Ascending aorta (tissue), 2 donors: ENCODE measurements at regions of chr1 and their contacts with region 1.

Region 1: DNA sequence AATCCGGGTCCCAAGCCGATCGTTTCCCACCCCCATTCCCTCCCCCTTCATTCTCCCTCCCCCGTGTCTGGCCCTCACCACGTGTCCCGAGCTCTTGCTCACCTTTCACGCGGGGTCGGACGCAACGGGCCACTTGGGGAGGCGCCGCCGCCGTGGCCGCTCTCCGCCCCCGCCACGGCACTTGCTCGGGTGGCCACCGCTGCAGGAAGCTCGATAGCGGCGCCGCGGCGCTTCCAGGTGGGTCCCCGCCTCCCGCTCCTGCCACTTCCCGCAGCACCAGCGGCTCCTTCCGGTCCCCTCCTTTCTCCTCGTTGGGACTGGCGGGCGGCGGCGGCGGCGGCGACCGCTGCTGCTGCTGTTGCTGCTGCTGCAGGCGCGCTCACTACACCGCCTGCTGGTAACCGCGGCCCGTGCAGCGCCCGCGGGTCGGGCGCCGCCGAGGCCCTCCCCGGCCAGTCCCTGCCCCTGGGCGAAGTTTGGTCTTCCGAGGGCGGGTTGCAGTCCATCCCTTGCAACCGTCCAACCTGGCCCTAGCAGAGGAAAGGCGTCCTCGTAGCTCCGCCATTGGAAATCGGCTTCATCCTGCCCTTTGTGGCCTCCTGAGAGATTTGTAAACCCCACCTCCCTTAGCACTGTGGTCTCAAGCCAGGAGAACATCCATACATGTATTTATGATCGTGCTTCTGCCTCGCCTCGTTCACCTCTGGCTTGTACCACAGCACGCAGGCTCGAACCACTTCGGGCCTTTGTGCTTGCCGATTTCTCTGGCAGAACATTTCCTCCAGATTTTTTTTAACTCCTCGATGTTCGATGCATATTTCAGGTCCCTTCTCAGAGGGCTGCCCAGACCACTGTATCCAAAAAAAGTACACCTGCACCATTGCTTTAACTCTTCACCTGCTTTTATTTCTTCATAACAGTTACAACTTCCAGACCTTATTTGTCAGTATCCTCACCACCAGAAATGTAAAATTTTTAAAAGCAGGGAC is 996 bp upstream of the ZZZ3 start:
- DNase-seq: peak; percentile 67 to 96
- H3K4me3 ChIP-seq: peak overlapping the region; percentile 63 to 71
- H3K27ac ChIP-seq: peak overlapping the region; percentile 90
- H3K4me1 ChIP-seq: peaks cover 0 to 25% of the 10 kb centered on the region in 2 donors
- H3K27me3 ChIP-seq: no peaks in the 10 kb centered on the region
- CTCF ChIP-seq: peak; percentile 79 to 95 (median 92)

Region 2: DNA sequence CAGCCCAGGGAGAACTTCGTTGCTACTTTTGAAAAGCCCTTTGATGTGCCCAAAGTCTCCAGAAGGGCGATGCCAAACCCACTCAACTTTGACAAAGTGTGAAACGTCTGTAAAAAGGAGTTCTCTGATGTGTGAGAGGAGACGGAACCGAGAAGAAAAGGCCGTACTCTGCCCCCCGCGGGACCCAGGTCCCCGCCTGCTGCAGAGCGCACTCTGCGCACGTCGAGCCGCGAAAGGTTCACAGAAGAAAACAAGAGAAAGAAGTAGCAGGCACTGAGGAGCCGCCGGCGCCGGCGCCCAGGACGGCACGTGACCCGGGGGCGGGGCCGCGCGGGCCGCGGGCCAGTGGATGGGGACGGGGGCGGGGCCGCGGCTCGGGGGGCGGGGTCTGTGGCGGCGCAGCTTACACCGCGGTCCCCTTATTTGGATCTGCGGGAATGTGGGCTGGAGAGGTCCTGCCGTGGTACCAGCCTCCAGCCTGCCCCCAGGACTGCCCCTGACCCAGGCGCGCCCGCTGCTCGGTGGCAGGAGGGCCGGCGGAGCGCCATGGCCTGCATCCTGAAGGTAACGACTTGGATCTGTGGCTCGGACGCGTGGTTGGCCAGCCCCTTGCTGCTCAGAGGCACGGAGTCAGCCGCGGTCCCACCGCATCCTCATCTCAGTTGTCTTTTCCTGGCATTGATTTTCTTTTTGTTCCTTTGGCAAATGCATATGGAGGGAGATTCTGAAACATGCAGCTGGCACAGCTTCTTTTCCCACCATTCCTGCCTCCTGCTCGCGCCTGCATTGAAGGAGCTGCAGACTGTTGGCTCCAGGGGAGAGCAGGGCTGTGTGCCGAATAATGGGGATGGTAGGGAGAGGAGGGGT is 1608.9 kb before region 1 on chr1 and contains the start of gene ST6GALNAC3:
- intact Hi-C with region 1: loop called (anchors 10 kb)
- DNase-seq: peak; percentile 41 to 88
- H3K4me3 ChIP-seq: peak within 1 kb of the TSS; percentile 58 to 74
- H3K27ac ChIP-seq: peak within 1 kb of the TSS; percentile 58 to 76
- H3K4me1 ChIP-seq: peaks cover 0 to 8% of the 10 kb centered on the region in 2 donors
- H3K27me3 ChIP-seq: no peaks in the 10 kb centered on the region
- CTCF ChIP-seq: no peak
- total RNA-seq, gene ST6GALNAC3: 34.5 TPM

Region 3: DNA sequence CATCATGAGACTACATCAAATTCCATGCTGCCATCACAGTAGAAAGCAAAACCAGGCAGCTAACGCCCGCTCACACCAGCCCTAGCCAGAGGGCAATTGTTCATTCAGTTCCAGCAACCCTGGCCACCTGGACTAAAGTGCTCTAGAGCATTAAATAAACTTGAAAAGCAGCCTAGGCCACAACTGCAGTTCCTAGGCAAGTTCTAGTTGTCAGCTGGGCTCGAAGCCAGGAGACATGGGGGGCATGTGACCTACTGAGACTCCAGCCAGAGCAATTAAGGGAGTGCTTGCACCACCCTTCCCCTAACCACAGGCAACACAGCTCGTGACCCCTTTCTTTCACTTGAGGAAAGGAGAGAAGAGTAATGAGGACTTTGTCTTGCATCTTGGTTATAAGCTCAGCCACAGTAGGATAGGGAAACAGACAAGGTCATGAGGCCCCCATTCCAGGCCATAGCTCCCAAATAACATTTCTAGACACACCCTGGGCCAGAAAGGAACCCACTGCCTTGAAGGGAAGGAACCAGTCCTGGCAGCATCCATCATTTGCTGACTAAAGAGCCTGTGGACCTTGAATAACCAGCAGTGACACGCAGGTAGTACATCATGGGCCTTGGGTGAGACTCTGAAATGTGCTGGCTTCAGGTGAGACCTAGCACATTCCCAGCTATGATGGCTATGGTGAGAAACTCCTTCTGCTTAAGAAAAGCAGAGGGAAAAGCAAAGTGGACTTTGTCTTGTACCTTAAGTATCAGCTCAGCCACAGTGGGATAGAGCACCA is 78.0 kb before region 1 on chr1:
- intact Hi-C with region 1: no loop called
- DNase-seq: peak in 1 of 2 donors; percentile 17
- H3K4me3 ChIP-seq: no peak overlapping the region
- H3K27ac ChIP-seq: no peak overlapping the region
- H3K4me1 ChIP-seq: no peaks in the 10 kb centered on the region
- H3K27me3 ChIP-seq: no peaks in the 10 kb centered on the region
- CTCF ChIP-seq: no peak

Region 4: GRCh38 chr1:77759071-77760028 is 75.9 kb after region 1 on chr1 and contains the start of gene USP33:
- intact Hi-C with region 1: loop called (anchors 5 kb)
- DNase-seq: peak; percentile 53 to 90
- H3K4me3 ChIP-seq: peak within 1 kb of the TSS; percentile 90 to 96
- H3K27ac ChIP-seq: peak within 1 kb of the TSS; percentile 88 to 89
- H3K4me1 ChIP-seq: peaks cover 0 to 4% of the 10 kb centered on the region in 2 donors
- H3K27me3 ChIP-seq: no peaks in the 10 kb centered on the region
- CTCF ChIP-seq: no peak
- total RNA-seq, gene USP33: 28.6 TPM

Region 5: GRCh38 chr1:77888081-77888780 is 204.8 kb after region 1 on chr1 and contains the start of gene NEXN:
- intact Hi-C with region 1: loop called (anchors 1 kb)
- DNase-seq: peak; percentile 49 to 91
- H3K4me3 ChIP-seq: peak within 1 kb of the TSS; percentile 70 to 95
- H3K27ac ChIP-seq: peak within 1 kb of the TSS; percentile 86 to 98
- H3K4me1 ChIP-seq: peaks cover 2 to 8% of the 10 kb centered on the region in 2 donors
- H3K27me3 ChIP-seq: no peaks in the 10 kb centered on the region
- CTCF ChIP-seq: no peak
- total RNA-seq, gene NEXN: 38.2 TPM

Region 6: DNA sequence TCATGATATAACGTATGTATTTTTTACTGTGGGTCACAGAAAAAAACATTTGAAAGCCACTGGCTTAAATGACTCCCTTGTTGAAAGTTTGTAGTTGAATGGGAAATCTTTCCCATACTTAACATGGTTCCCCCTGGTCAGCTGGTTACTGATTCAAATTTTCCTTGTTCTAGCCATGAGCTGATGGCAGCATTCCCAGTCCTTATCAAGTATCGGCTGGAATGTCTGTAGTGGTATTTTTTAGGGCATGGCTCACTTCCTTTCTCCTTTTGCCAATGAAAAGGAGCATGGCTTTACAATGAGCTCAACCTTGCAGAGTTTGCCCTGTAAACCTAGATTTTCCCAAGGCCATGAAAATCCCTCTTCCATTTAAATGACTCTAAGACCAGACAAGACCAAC is 418.1 kb after region 1 on chr1:
- intact Hi-C with region 1: loop called (anchors 5 kb)
- DNase-seq: peak in 1 of 2 donors; percentile 90
- H3K4me3 ChIP-seq: no peak overlapping the region
- H3K27ac ChIP-seq: peak overlapping the region; percentile 80 to 81
- H3K4me1 ChIP-seq: peaks cover 0 to 34% of the 10 kb centered on the region in 2 donors
- H3K27me3 ChIP-seq: no peaks in the 10 kb centered on the region
- CTCF ChIP-seq: no peak